Posterior vena cava (tissue), 2 donors: ENCODE measurements at regions of chr1 and their contacts with region 1.

Region 1: GRCh38 chr1:84282780-84283333 is 18.7 kb upstream of the SAMD13 start:
- DNase-seq: no peak

Region 2: DNA sequence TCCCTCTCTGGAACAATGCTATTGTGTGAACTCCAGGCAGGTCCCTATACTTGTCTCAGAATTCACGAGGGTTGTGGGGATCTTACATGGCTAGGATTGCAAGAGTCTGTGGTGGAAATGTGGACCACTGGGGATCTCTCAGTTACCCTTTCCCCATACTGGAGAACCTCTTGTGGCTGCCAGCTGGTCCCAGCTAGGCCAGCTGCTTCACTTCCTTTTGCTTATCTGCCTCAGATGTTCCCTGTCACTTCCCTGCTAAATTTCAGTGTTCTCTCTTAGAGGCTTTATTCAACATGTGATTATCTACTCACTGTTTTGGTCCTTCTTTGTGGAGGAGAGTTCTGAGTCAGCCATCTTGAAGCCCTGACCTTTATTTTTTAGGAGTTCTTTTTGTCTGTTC is 57.2 kb before region 1 on chr1:
- intact Hi-C with region 1: loop called in 1 of 2 experiments (anchors 2 kb)
- DNase-seq: no peak

Region 3: GRCh38 chr1:85042413-85042812 is 759.6 kb after region 1 on chr1:
- intact Hi-C with region 1: loop called in 1 of 2 experiments (anchors 5 kb)
- DNase-seq: no peak